A549 (cell line): ENCODE measurements at regions of chr13 and their contacts with region 1.

Region 1: GRCh38 chr13:27953676-27954405 is 15.3 kb downstream of the CDX2 start:
- DNase-seq: peak; percentile 57 to 82
- ATAC-seq: peak; percentile 94 to 98
- H3K4me3 ChIP-seq: peak overlapping the region; percentile 60
- H3K27ac ChIP-seq: peak overlapping the region; percentile 92 to 99
- H3K4me1 ChIP-seq: 0 out of 3 replicates have a peak, but pooled peaks cover 2% of the 10 kb centered on the region
- CTCF ChIP-seq: peak; percentile 76
- EP300 ChIP-seq: no peak
- POLR2A ChIP-seq: no peak
- RAD21 ChIP-seq: peak; percentile 44 to 76

Region 2: GRCh38 chr13:27704681-27705080 is 249.2 kb before region 1 on chr13:
- CTCF ChIA-PET with region 1: no interaction called
- POLR2A ChIA-PET with region 1: no interaction called
- DNase-seq: no peak
- ATAC-seq: no peak
- H3K4me3 ChIP-seq: no peak overlapping the region
- H3K27ac ChIP-seq: no peak overlapping the region
- H3K4me1 ChIP-seq: no peaks in the 10 kb centered on the region
- CTCF ChIP-seq: no peak
- EP300 ChIP-seq: no peak
- POLR2A ChIP-seq: no peak
- RAD21 ChIP-seq: no peak

Region 3: DNA sequence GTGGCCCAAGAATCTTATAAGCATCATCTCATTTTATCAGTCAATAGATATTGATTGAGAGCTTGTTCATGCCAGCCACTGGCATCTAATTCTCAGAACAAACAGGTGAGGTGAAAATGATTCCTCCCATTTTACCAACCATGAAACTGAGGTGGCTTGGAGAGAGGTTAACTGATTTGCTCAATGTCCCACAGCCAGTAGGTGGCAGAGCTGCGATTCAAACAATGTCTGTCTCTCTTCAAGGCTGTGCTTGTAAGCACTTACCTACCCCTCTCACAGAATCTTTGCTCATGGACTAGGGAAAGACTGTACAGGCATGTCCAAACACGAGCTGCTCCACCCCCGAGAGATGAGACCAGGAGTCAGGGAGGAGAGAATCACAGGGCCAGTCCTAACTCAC is 183.0 kb before region 1 on chr13:
- CTCF ChIA-PET with region 1: interaction called, 15 read pairs
- POLR2A ChIA-PET with region 1: no interaction called
- DNase-seq: peak; percentile 15 to 46
- ATAC-seq: peak; percentile 71 to 83; a peak in 5 of 6 replicates
- H3K4me3 ChIP-seq: no peak overlapping the region
- H3K27ac ChIP-seq: no peak overlapping the region
- H3K4me1 ChIP-seq: no peaks in the 10 kb centered on the region
- CTCF ChIP-seq: peak; percentile 28; the same call in 2 of the 3 replicates
- EP300 ChIP-seq: no peak
- POLR2A ChIP-seq: no peak
- RAD21 ChIP-seq: peak; percentile 23 to 46; a peak in 2 of 5 replicates

Region 4: DNA sequence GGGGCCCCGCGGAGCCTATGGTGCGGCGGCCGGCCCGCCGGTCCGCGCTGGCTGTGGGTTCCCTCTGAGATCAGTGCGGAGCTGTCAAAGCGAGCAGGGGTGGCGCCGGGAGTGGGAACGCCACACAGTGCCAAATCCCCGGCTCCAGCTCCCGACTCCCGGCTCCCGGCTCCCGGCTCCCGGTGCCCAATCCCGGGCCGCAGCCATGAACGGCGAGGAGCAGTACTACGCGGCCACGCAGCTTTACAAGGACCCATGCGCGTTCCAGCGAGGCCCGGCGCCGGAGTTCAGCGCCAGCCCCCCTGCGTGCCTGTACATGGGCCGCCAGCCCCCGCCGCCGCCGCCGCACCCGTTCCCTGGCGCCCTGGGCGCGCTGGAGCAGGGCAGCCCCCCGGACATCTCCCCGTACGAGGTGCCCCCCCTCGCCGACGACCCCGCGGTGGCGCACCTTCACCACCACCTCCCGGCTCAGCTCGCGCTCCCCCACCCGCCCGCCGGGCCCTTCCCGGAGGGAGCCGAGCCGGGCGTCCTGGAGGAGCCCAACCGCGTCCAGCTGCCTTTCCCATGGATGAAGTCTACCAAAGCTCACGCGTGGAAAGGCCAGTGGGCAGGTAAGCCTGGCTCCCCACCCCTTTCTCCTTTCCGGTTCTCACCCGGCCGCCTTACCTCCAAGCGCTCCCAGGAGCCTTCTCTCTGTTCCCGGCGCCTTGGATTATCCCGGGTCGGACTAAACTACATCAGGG is 33.7 kb before region 1 on chr13 and contains the start of gene PDX1:
- CTCF ChIA-PET with region 1: interaction called, 12 read pairs
- POLR2A ChIA-PET with region 1: interaction called, 6 read pairs
- DNase-seq: peak in 1 of 2 experiments; percentile 71
- ATAC-seq: peak; percentile 93 to 98
- H3K4me3 ChIP-seq: peak within 1 kb of the TSS; percentile 55
- H3K27ac ChIP-seq: peak within 1 kb of the TSS in 1 of 2 experiments; percentile 67; a peak in 3 of 6 replicates
- H3K4me1 ChIP-seq: no peaks in the 10 kb centered on the region
- CTCF ChIP-seq: no peak
- EP300 ChIP-seq: no peak
- POLR2A ChIP-seq: no peak
- RAD21 ChIP-seq: no peak
- polyA plus RNA-seq, gene PDX1: 0.04 and 0.06 TPM in 2 replicates

Region 5: GRCh38 chr13:27968316-27969081 is 14.7 kb after region 1 on chr13:
- CTCF ChIA-PET with region 1: interaction called, 32 read pairs
- POLR2A ChIA-PET with region 1: interaction called, 7 read pairs
- DNase-seq: peak in 1 of 2 experiments; percentile 36
- ATAC-seq: peak; percentile 61 to 87
- H3K4me3 ChIP-seq: peak overlapping the region; percentile 56
- H3K27ac ChIP-seq: peak overlapping the region; percentile 36 to 79; a peak in 4 of 6 replicates
- H3K4me1 ChIP-seq: no peaks in the 10 kb centered on the region
- CTCF ChIP-seq: no peak
- EP300 ChIP-seq: no peak
- POLR2A ChIP-seq: no peak
- RAD21 ChIP-seq: no peak